Endothelial cell of umbilical vein (primary cell): ENCODE measurements at regions of chr22 and their contacts with region 1.

Region 1: DNA sequence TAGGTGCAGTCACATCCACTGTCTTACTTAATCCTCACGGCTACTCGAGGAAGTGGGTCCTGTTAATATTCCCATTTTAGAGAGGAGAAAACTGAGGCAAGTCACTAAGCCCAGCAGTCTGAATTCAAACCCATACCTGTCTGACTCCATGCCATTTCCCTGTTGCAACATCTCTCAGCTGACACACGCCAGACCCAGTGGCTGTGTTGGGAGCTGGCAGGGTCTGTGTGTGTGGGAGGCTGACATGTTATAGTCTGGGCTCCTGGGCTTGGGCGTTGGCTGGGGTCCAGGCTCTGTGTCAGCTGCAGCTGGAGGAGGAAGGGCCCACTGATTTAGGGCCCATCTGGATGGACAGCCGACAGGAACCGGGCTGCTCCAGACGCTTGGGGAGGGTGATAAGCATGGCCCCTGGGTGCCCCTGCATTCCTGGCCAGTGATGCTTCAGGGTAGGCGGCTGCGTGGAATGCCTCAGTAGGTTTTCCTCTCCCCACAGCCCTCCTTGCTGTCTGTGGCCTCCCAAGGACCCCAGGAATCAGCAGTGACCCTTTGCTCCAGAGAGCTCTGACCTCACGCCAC is 562.5 kb downstream of the MN1 start:
- DNase-seq: peak; percentile 99
- H3K4me3 ChIP-seq: no peak overlapping the region
- H3K27ac ChIP-seq: peak overlapping the region; percentile 96
- H3K4me1 ChIP-seq: peaks cover 44% of the 10 kb centered on the region
- H3K27me3 ChIP-seq: no peaks in the 10 kb centered on the region
- CTCF ChIP-seq: no peak
- POLR2A ChIP-seq: peak; percentile 92

Region 2: GRCh38 chr22:26679003-26679629 is 559.9 kb before region 1 on chr22:
- CTCF ChIA-PET with region 1: interaction called, 4 read pairs
- POLR2A ChIA-PET with region 1: no interaction called
- dilution Hi-C with region 1: no loop called
- intact Hi-C with region 1: loop called (anchors 1 kb)
- DNase-seq: peak; percentile 84
- H3K4me3 ChIP-seq: no peak overlapping the region
- H3K27ac ChIP-seq: no peak overlapping the region
- H3K4me1 ChIP-seq: peaks cover 13% of the 10 kb centered on the region
- H3K27me3 ChIP-seq: no peaks in the 10 kb centered on the region
- CTCF ChIP-seq: peak; percentile 93 to 96
- POLR2A ChIP-seq: no peak

Region 3: GRCh38 chr22:27113211-27113635 is 125.8 kb before region 1 on chr22:
- CTCF ChIA-PET with region 1: interaction called, 3 read pairs
- POLR2A ChIA-PET with region 1: no interaction called
- dilution Hi-C with region 1: no loop called
- intact Hi-C with region 1: loop called (anchors 1 kb)
- DNase-seq: peak; percentile 86
- H3K4me3 ChIP-seq: no peak overlapping the region
- H3K27ac ChIP-seq: peak overlapping the region; percentile 93
- H3K4me1 ChIP-seq: peaks cover 63% of the 10 kb centered on the region
- H3K27me3 ChIP-seq: no peaks in the 10 kb centered on the region
- CTCF ChIP-seq: no peak
- POLR2A ChIP-seq: no peak

Region 4: DNA sequence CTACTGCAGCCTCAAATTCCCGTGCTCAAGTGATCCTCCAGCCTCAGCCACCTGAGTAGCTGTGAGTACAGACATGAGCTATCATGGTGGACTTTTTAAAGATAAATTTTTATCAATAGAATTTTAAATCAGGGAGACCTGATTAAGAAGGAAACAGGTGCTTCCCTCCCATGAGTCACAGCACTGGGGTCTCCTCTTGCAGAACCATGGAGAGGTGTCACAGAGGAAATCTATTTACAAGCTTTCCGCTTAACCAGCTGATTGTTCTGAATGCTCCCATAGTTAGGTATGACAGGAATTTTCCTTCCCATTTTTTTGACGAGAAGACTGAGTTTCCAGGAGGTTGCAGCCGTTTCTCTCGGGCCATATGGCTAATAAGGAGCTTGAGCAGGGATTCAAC is 65.5 kb before region 1 on chr22:
- CTCF ChIA-PET with region 1: no interaction called
- POLR2A ChIA-PET with region 1: no interaction called
- dilution Hi-C with region 1: no loop called
- intact Hi-C with region 1: loop called (anchors 1 kb)
- DNase-seq: peak; percentile 79
- H3K4me3 ChIP-seq: no peak overlapping the region
- H3K27ac ChIP-seq: peak overlapping the region; percentile 76
- H3K4me1 ChIP-seq: peaks cover 18% of the 10 kb centered on the region
- H3K27me3 ChIP-seq: no peaks in the 10 kb centered on the region
- CTCF ChIP-seq: no peak
- POLR2A ChIP-seq: no peak

Region 5: DNA sequence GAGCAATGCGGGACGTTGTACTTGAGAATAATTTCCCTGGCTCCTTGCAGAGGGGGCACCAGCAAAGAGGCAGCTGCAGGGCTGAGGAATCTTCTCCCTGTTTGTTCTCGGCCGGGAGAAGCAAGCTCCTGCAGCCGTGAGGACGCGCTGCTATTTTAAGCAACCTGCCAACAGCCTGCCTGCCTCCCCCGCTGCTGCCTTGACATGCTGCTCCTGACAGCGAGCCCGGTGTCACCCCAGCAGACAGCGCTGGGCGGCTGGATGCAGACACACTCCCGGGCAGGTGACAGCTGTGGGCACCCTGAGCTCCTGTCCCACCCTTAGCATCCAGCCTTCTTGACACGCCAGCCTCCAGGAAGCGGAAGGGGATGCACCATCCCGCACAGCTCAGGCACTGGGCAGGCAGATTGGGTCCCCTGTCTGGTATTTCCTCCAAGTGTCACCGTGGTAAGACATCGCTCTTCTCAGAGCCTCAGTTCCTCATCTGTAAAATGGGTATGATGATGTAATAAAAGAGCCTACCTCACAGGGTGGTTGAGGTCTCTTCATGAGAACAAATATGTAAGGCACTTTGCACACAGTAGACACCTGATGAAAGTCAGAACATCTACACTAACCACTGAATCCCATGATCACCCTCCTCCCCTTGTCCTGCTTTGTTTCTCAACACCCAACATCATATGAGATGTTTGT is 31.9 kb after region 1 on chr22:
- CTCF ChIA-PET with region 1: no interaction called
- POLR2A ChIA-PET with region 1: no interaction called
- dilution Hi-C with region 1: no loop called
- intact Hi-C with region 1: no loop called
- DNase-seq: no peak
- H3K4me3 ChIP-seq: no peak overlapping the region
- H3K27ac ChIP-seq: no peak overlapping the region
- H3K4me1 ChIP-seq: no peaks in the 10 kb centered on the region
- H3K27me3 ChIP-seq: peaks cover 16 to 21% of the 10 kb centered on the region in 2 experiments
- CTCF ChIP-seq: no peak
- POLR2A ChIP-seq: no peak

Region 6: DNA sequence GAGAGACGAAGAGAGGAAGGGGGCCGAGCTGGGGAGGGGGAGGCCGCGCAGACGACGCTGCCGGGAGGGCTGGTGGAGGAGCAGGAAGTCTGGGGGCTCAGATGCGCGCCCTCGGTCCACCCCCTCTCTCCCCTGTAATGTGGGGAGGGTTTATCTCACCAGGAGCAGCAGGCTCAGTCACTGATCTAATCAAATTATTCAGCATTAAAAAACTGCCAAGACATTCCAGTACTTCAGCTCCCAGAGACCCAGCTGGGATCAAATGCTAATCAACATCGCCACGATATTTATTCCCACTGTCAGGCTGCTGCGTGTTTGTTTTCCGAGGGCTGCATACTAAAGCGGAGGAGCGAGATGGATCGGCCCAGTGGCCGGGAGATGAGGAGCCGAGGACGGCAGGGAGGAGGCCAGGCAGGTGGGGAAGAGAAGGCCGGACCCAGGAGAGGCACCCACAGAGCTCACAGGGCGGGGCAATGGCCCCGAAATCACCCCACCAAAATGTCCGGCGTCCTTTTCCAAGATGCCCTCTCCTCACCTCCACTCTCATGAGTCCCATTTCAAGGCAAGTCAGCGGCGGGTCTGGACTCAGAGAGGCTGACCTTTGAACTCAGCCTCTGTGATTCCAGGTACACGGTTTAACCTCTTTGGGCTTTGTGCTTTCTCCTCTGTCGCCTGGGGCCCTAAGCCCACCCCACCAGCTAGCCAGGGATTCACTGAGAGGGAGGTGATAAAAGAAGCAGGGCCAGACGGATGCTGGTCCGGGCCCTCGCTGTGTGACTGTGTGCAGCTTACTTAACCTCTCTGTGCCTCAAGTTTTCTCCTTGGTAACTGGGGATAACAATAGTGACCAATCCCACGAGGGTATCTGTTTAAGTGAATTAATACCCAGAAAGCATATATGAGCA is 60.4 kb after region 1 on chr22:
- CTCF ChIA-PET with region 1: no interaction called
- POLR2A ChIA-PET with region 1: no interaction called
- dilution Hi-C with region 1: no loop called
- intact Hi-C with region 1: loop called (anchors 1 kb)
- DNase-seq: peak; percentile 85
- H3K4me3 ChIP-seq: peak overlapping the region in 2 of 3 experiments; percentile 3 to 34
- H3K27ac ChIP-seq: peak overlapping the region; percentile 40
- H3K4me1 ChIP-seq: peaks cover 27% of the 10 kb centered on the region
- H3K27me3 ChIP-seq: no peaks in the 10 kb centered on the region
- CTCF ChIP-seq: no peak
- POLR2A ChIP-seq: peak; percentile 54